ENCODE measurements at regions of chr12 and their contacts with region 1.

Region 1: GRCh38 chr12:71797531-71797930 is 42.0 kb upstream of the TBC1D15 start:
- DNase-seq: no peak
- ATAC-seq: no peak
- H3K4me3 ChIP-seq: no peak overlapping the region
- H3K4me3 Mint-ChIP-seq: no peak overlapping the region
- H3K27ac ChIP-seq: no peak overlapping the region
- H3K27ac Mint-ChIP-seq: peak overlapping the region in 1 of 2 donors; percentile 44
- H3K4me1 ChIP-seq: no peaks in the 10 kb centered on the region
- H3K4me1 Mint-ChIP-seq: no peaks in the 10 kb centered on the region
- H3K27me3 ChIP-seq: no peaks in the 10 kb centered on the region
- H3K27me3 Mint-ChIP-seq: no peaks in the 10 kb centered on the region

Region 2: DNA sequence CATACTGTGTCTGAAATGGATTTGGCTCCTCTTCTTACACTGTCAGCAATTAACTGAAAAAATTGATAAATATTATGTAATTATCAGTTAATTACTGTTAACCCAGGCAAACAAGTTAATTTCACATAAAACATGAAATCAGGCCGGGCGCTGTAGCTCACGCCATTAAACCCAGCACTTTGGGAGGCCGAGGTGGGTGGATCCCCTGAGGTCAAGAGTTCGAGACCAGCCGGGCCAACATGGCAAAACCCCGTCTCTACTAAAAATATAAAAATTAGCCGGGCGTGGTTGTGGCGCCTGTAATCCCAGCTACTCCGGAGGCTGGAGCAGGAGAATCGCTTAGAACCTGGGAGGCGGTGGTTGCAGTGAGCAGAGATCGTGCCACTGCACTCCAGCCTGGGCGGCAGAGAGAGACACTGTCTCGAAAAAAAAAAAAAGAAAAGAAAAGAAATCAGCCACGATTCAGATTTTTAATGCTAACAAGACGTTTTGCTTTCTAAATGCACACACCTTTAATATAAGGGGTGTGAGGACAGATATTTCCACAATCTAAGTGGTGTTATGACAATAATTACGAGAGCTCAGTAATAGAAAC is 112.1 kb before region 1 on chr12:
- CTCF ChIA-PET with region 1: no interaction called
- POLR2A ChIA-PET with region 1: no interaction called
- DNase-seq: peak in 1 of 35 experiments; percentile 4
- ATAC-seq: no peak
- H3K4me3 ChIP-seq: peak overlapping the region; percentile 57 to 79
- H3K4me3 Mint-ChIP-seq: peak overlapping the region; percentile 85 to 96 (median 92)
- H3K27ac ChIP-seq: peak overlapping the region; percentile 62
- H3K27ac Mint-ChIP-seq: peak overlapping the region; percentile 87 to 90
- H3K4me1 ChIP-seq: peaks cover 5 to 16% of the 10 kb centered on the region in 2 experiments
- H3K4me1 Mint-ChIP-seq: peaks cover 24 to 43% (median 35%) of the 10 kb centered on the region in 3 donors
- H3K27me3 ChIP-seq: no peaks in the 10 kb centered on the region
- H3K27me3 Mint-ChIP-seq: no peaks in the 10 kb centered on the region

Region 3: DNA sequence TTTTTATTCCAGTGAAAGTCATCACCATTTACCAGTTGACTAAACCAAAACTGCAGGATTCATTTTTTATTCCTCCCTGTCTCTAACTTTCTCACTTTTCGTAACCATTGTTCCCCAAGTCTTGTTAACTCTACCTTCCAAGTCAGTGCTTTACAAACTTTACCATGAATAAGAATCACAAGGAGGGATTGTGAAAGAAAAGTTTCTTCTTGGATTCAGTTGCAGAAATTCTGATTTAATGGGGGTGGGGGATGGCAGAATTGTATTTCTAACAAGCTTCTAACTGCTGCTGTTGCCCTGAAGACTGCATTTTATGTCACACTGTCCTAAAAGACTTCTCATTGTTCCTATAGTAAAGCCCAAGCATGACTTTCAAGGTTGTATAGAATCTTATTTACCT is 47.9 kb before region 1 on chr12:
- CTCF ChIA-PET with region 1: no interaction called
- POLR2A ChIA-PET with region 1: no interaction called
- DNase-seq: no peak
- ATAC-seq: no peak
- H3K4me3 ChIP-seq: no peak overlapping the region
- H3K4me3 Mint-ChIP-seq: no peak overlapping the region
- H3K27ac ChIP-seq: no peak overlapping the region
- H3K27ac Mint-ChIP-seq: no peak overlapping the region
- H3K4me1 ChIP-seq: peaks cover 4 to 8% of the 10 kb centered on the region in 2 experiments
- H3K4me1 Mint-ChIP-seq: peaks cover 8 to 10% (median 9%) of the 10 kb centered on the region in 3 donors
- H3K27me3 ChIP-seq: peaks cover 2 to 9% of the 10 kb centered on the region in 2 experiments
- H3K27me3 Mint-ChIP-seq: peaks cover 4 to 12% of the 10 kb centered on the region in 2 donors

Region 4: GRCh38 chr12:71786829-71787228 is 10.7 kb before region 1 on chr12:
- CTCF ChIA-PET with region 1: no interaction called
- POLR2A ChIA-PET with region 1: no interaction called
- DNase-seq: no peak
- ATAC-seq: no peak
- H3K4me3 ChIP-seq: no peak overlapping the region
- H3K4me3 Mint-ChIP-seq: no peak overlapping the region
- H3K27ac ChIP-seq: no peak overlapping the region
- H3K27ac Mint-ChIP-seq: peak overlapping the region in 1 of 2 donors; percentile 56
- H3K4me1 ChIP-seq: peaks cover 0 to 12% of the 10 kb centered on the region in 2 experiments
- H3K4me1 Mint-ChIP-seq: peaks cover 11 to 19% (median 13%) of the 10 kb centered on the region in 3 donors
- H3K27me3 ChIP-seq: no peaks in the 10 kb centered on the region
- H3K27me3 Mint-ChIP-seq: no peaks in the 10 kb centered on the region

Region 5: GRCh38 chr12:71810905-71811304 is 13.4 kb after region 1 on chr12:
- CTCF ChIA-PET with region 1: interaction called in 1 of 2 experiments, 15 read pairs
- POLR2A ChIA-PET with region 1: interaction called in 1 of 2 experiments, 3 read pairs
- DNase-seq: no peak
- ATAC-seq: no peak
- H3K4me3 ChIP-seq: no peak overlapping the region
- H3K4me3 Mint-ChIP-seq: no peak overlapping the region
- H3K27ac ChIP-seq: no peak overlapping the region
- H3K27ac Mint-ChIP-seq: no peak overlapping the region
- H3K4me1 ChIP-seq: no peaks in the 10 kb centered on the region
- H3K4me1 Mint-ChIP-seq: no peaks in the 10 kb centered on the region
- H3K27me3 ChIP-seq: peaks cover 0 to 3% of the 10 kb centered on the region in 2 experiments
- H3K27me3 Mint-ChIP-seq: peaks cover 13 to 19% of the 10 kb centered on the region in 2 donors